Mammary epithelial cell (primary cell): ENCODE measurements at regions of chr15 and their contacts with region 1.

Region 1: DNA sequence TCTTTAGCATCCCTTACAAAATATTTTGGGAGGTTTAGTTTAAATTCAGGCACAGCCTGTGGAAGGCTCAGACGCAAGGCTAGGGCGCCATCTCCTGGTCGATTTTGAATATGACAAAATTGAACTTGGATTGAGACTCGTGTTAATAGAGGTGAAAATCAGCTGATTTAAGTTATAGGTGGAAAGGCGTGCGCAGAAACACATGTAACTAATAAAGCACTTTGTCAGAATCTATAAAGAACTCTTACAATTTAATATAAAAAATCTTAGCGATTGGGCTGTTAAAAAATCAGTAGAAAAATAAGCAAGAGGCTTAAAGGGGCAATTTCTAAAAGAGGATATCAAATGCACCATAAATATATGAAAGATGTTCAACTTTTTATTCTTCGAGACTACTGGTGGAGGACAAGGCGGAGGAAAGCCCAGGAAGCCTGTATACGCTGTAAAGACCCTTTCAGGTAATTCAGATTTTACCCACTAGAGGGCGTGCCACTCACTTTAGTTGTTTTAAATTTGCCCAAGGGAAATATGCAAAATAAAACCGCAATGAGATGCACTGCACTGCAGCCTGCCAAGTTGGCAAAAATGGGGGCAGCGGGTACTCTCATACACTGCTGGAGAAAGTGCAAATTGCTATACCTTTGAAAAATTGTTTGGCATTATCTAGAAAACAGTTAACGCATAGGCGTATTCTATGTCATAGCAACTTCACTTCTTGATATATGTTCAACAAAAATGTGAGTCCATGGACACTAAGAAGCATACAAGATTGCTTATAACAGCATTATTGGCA is 64.7 kb downstream of the SLC30A4 start:
- DNase-seq: peak; percentile 66
- H3K4me3 ChIP-seq: peak overlapping the region; percentile 26 to 49 (median 47)
- H3K27ac ChIP-seq: peak overlapping the region; percentile 76
- H3K4me1 ChIP-seq: peaks cover 38% of the 10 kb centered on the region
- H3K27me3 ChIP-seq: no peaks in the 10 kb centered on the region
- CTCF ChIP-seq: peak; percentile 54 to 70

Region 2: DNA sequence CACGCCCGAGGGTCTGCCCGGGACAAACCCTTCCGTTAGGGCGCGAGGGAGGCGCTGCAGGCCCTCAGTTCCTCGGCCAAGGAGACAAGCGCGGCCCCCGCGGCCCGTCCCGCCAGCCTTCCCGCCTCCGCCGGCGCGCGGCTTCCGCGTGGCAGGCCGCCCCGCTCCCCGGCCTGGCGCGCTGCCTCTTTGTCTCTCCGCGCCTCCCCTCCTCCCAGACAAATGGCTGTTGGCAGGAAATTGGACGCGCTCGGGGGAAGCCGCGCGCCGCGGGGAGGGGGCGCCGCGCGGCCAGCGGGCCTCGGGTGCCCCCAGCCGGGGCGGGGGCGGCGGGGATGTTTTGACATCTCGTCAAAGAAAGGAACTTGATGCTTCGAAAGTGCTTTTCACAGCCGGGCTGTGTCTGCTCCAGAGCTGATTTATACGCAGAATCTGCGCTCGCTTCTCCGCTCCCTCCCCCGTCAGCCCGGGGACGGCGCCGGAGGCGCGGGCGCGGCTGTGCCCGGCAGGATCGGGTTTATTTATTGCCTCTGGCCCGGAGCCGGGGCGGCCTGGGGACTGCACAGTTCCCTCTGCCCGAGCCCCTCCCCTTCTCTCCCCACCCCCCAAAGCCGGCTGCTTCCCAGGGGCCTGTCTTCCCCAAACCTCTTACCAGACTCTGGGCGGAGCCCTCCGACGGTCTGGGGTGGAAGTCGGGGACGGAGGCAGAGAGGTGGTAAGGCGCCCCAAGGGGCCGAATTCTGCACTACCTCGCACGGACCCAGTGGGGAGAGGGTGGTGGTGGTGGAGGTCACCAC is 290.8 kb before region 1 on chr15:
- CTCF ChIA-PET with region 1: no interaction called
- dilution Hi-C with region 1: no loop called
- in situ Hi-C with region 1: no loop called
- intact Hi-C with region 1: loop called (anchors 2 kb)
- DNase-seq: peak; percentile 44
- H3K4me3 ChIP-seq: peak overlapping the region; percentile 50 to 58 (median 54)
- H3K27ac ChIP-seq: peak overlapping the region; percentile 35
- H3K4me1 ChIP-seq: peaks cover 22% of the 10 kb centered on the region
- H3K27me3 ChIP-seq: no peaks in the 10 kb centered on the region
- CTCF ChIP-seq: peak; percentile 42 to 65

Region 3: DNA sequence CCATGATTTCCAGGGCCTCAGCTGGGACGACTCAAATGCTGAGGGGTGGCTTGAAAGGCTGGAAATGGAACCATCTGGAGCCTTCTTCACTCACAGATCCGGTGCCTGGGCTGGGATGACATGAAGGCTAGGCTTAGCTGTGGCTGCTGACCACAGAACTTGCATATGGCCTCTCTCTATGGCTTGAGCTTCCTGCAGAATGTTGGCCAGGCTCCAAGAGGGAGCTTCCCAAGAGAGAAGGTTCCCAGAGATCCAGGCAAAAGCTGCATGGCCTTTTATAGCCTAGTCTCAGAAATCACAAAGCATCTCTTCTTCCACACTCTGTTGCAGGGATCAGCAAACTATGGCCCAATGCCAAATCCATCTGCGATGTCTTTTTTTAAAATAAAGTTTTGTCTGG is 124.3 kb before region 1 on chr15:
- CTCF ChIA-PET with region 1: no interaction called
- dilution Hi-C with region 1: no loop called
- in situ Hi-C with region 1: no loop called
- intact Hi-C with region 1: no loop called
- DNase-seq: peak; percentile 2
- H3K4me3 ChIP-seq: no peak overlapping the region
- H3K27ac ChIP-seq: no peak overlapping the region
- H3K4me1 ChIP-seq: no peaks in the 10 kb centered on the region
- H3K27me3 ChIP-seq: peaks cover 2% of the 10 kb centered on the region
- CTCF ChIP-seq: no peak

Region 4: GRCh38 chr15:45402162-45402954 is 55.5 kb before region 1 on chr15:
- CTCF ChIA-PET with region 1: no interaction called
- dilution Hi-C with region 1: no loop called
- in situ Hi-C with region 1: no loop called
- intact Hi-C with region 1: loop called (anchors 1 kb)
- DNase-seq: peak; percentile 99
- H3K4me3 ChIP-seq: peak overlapping the region; percentile 79 to 99 (median 96)
- H3K27ac ChIP-seq: peak overlapping the region; percentile 63
- H3K4me1 ChIP-seq: peaks cover 20% of the 10 kb centered on the region
- H3K27me3 ChIP-seq: no peaks in the 10 kb centered on the region
- CTCF ChIP-seq: no peak

Region 5: GRCh38 chr15:45429974-45430792 is 27.7 kb before region 1 on chr15:
- CTCF ChIA-PET with region 1: interaction called, 5 read pairs
- dilution Hi-C with region 1: no loop called
- in situ Hi-C with region 1: no loop called
- intact Hi-C with region 1: loop called (anchors 1 kb)
- DNase-seq: peak; percentile 39
- H3K4me3 ChIP-seq: peak overlapping the region in 2 of 3 experiments; percentile 36 to 42
- H3K27ac ChIP-seq: no peak overlapping the region
- H3K4me1 ChIP-seq: peaks cover 4% of the 10 kb centered on the region
- H3K27me3 ChIP-seq: no peaks in the 10 kb centered on the region
- CTCF ChIP-seq: peak; percentile 87 to 100

Region 6: DNA sequence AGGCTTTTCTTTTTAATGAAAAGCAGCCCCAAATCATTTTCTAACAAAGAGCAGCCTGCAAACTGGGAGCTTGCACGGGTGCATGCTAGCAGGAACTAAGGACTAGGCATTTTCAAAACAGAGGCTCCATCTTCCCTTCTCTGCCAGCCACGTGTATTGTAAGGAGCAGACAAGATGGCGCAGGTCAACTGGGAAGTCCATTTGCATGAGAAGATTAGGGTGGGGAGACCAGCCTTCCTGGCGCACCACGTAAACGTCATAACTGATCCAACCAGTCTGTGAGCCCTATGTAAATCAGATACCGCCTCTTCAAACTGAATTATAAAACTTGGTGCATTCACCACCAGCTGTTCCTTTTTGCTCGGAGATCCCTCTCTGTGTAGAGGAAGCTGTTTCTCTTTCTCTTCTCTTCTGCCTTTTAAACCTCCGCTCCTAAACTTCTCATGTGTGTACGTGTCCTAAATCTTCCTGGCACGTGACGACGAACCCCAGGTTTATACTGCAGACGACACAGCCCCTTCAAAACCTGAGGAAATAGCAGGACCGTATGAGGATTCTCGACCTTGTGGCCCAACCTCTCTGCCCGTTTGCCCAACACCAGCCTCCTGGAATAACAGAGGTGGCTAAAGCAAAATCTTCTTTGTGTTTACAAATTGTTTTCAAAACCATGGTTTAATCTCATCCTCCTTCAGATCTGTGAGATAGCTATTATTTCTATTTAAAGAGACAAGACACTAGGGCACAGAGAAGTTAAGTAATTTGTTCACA is 91.1 kb after region 1 on chr15:
- CTCF ChIA-PET with region 1: no interaction called
- dilution Hi-C with region 1: no loop called
- in situ Hi-C with region 1: no loop called
- intact Hi-C with region 1: no loop called
- DNase-seq: no peak
- H3K4me3 ChIP-seq: no peak overlapping the region
- H3K27ac ChIP-seq: no peak overlapping the region
- H3K4me1 ChIP-seq: peaks cover 6% of the 10 kb centered on the region
- H3K27me3 ChIP-seq: no peaks in the 10 kb centered on the region
- CTCF ChIP-seq: no peak

Region 7: GRCh38 chr15:45587095-45587860 is 129.4 kb after region 1 on chr15 and contains the start of gene BLOC1S6:
- CTCF ChIA-PET with region 1: no interaction called
- dilution Hi-C with region 1: no loop called
- in situ Hi-C with region 1: no loop called
- intact Hi-C with region 1: loop called (anchors 1 kb)
- DNase-seq: peak; percentile 91
- H3K4me3 ChIP-seq: peak within 1 kb of the TSS; percentile 68 to 88 (median 79)
- H3K27ac ChIP-seq: peak within 1 kb of the TSS; percentile 93
- H3K4me1 ChIP-seq: peaks cover 19% of the 10 kb centered on the region
- H3K27me3 ChIP-seq: no peaks in the 10 kb centered on the region
- CTCF ChIP-seq: no peak
- total RNA-seq, gene BLOC1S6: 38.0 to 49.2 TPM

Region 8: GRCh38 chr15:45780352-45780751 is 322.5 kb after region 1 on chr15:
- CTCF ChIA-PET with region 1: no interaction called
- dilution Hi-C with region 1: no loop called
- in situ Hi-C with region 1: no loop called
- intact Hi-C with region 1: loop called (anchors 10 kb)
- DNase-seq: no peak
- H3K4me3 ChIP-seq: no peak overlapping the region
- H3K27ac ChIP-seq: no peak overlapping the region
- H3K4me1 ChIP-seq: no peaks in the 10 kb centered on the region
- H3K27me3 ChIP-seq: peaks cover 1% of the 10 kb centered on the region
- CTCF ChIP-seq: no peak